PC-9 (cell line): ENCODE measurements at regions of chr17 and their contacts with region 1.

Region 1: GRCh38 chr17:33328129-33328528 is 35.0 kb upstream of the ASIC2 start:
- DNase-seq: peak in 1 of 2 experiments; percentile 3
- H3K4me3 ChIP-seq: no peak overlapping the region
- H3K27ac ChIP-seq: no peak overlapping the region
- H3K4me1 ChIP-seq: no peaks in the 10 kb centered on the region
- H3K27me3 ChIP-seq: no peaks in the 10 kb centered on the region
- CTCF ChIP-seq: no peak

Region 2: DNA sequence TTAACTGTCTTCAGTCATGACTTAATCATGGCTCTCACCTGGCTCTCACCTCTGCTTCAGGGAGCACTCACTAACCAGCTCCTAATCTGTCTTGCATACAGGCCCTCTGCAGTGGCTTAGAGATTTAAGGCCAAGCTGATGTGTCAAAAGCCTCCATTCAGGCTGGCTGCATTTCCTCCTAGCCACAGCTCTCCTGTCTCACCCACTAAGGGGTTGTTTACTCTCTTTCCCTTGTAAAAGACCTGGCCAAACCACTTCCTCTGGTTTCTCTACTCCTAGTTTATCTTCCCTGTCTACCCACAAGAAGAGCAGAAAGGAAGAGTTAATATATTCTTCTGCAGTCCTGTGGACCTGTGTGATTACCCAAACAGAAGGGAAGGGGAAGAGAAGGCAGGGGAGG is 25.7 kb before region 1 on chr17:
- CTCF ChIA-PET with region 1: no interaction called
- POLR2A ChIA-PET with region 1: no interaction called
- intact Hi-C with region 1: no loop called
- DNase-seq: no peak
- H3K4me3 ChIP-seq: no peak overlapping the region
- H3K27ac ChIP-seq: no peak overlapping the region
- H3K4me1 ChIP-seq: no peaks in the 10 kb centered on the region
- H3K27me3 ChIP-seq: peaks cover 11% of the 10 kb centered on the region
- CTCF ChIP-seq: no peak

Region 3: DNA sequence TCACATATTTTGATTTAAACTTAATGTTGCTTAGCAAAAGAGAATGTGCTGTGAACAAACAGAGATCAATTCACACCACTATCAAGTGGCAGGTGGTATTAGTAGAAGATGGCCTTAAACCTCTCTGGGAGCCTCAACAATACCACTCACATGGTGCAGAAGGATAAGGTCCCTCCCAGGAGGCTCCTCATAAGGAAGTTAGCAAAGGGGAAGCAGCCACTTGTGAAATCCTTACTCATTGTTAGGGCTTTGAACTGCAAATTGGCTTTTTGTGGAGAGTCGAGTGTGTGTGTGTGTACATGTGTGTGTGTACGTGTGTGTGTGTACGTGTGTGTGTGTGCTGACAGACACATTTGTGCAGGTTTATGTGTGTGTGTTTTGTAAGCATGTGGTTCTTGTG is 13.9 kb after region 1 on chr17:
- CTCF ChIA-PET with region 1: interaction called, 22 read pairs
- POLR2A ChIA-PET with region 1: no interaction called
- intact Hi-C with region 1: no loop called
- DNase-seq: no peak
- H3K4me3 ChIP-seq: no peak overlapping the region
- H3K27ac ChIP-seq: no peak overlapping the region
- H3K4me1 ChIP-seq: no peaks in the 10 kb centered on the region
- H3K27me3 ChIP-seq: peaks cover 41% of the 10 kb centered on the region
- CTCF ChIP-seq: no peak

Region 4: GRCh38 chr17:33421933-33422332 is 93.8 kb after region 1 on chr17:
- CTCF ChIA-PET with region 1: no interaction called
- POLR2A ChIA-PET with region 1: no interaction called
- intact Hi-C with region 1: no loop called
- DNase-seq: no peak
- H3K4me3 ChIP-seq: no peak overlapping the region
- H3K27ac ChIP-seq: no peak overlapping the region
- H3K4me1 ChIP-seq: no peaks in the 10 kb centered on the region
- H3K27me3 ChIP-seq: peaks cover 4% of the 10 kb centered on the region; the same call in 1 of the 2 replicates
- CTCF ChIP-seq: no peak